CD4-positive, alpha-beta memory T cell (primary cell): ENCODE measurements at regions of chr11 and their contacts with region 1.

Region 1: DNA sequence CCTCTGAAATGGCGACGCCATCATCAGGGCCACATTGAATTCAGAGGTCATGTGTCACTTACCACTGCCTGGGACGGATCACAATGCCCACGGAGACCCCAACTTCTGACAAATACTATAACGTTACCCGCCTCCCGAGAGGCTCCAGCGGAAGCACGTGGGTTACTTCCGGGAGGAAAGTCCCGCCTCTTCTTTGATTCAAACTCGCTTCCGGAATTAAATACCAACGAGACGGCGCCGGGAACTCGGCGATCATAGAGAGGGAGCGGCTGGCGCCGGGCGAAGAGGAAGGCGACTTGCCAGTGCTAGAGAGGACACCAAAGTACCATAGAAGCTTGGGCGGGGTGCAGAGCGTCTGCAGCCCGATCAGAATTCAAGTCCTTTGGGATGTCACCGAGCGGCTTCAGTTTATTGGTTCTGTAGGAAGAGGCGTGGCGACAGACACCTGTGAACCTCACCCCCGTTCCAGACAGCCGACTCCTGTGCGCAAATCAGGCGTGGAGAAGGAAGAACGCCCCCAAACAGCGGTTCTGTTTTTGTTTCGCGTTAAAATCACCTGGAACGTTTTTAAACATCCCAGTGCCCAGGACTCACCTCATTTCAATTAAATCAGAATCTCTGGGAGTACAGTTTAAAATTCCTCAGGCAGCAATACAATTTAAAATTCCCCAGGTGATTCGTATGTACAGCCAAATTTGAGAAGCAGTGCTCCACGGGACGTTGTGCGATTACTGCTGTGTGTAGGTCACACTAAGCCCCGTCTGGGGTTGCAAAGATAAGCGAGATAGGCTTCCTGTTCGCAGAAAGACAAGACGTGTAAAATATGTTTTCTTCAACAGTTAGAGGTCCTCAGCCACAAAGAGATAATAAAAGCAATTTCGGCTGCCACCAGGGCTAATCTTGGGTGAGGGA is at the start of gene TIMM10:
- DNase-seq: peak; percentile 93 to 98 (median 96)
- H3K4me3 ChIP-seq: peak within 1 kb of the TSS; percentile 71 to 94
- H3K4me3 Mint-ChIP-seq: peak within 1 kb of the TSS; percentile 88 to 95 (median 90)
- H3K27ac ChIP-seq: peak within 1 kb of the TSS; percentile 88
- H3K27ac Mint-ChIP-seq: peak within 1 kb of the TSS; percentile 92 to 96 (median 95)
- H3K4me1 ChIP-seq: peaks cover 23% of the 10 kb centered on the region
- H3K4me1 Mint-ChIP-seq: peaks cover 9 to 34% (median 26%) of the 10 kb centered on the region in 4 donors
- H3K27me3 ChIP-seq: no peaks in the 10 kb centered on the region
- H3K27me3 Mint-ChIP-seq: no peaks in the 10 kb centered on the region
- total RNA-seq, gene TIMM10: 30.4 to 34.6 TPM

Region 2: GRCh38 chr11:57426929-57427726 is 103.7 kb before region 1 on chr11 and contains the start of gene SLC43A3:
- CTCF ChIA-PET with region 1: interaction called, 5 read pairs
- POLR2A ChIA-PET with region 1: no interaction called
- intact Hi-C with region 1: loop called (anchors 1 kb)
- DNase-seq: peak; percentile 36 to 62 (median 37)
- H3K4me3 ChIP-seq: peak within 1 kb of the TSS; percentile 32 to 58
- H3K4me3 Mint-ChIP-seq: peak within 1 kb of the TSS; percentile 83 to 93 (median 88)
- H3K27ac ChIP-seq: peak within 1 kb of the TSS; percentile 45
- H3K27ac Mint-ChIP-seq: peak within 1 kb of the TSS; percentile 78 to 94 (median 90)
- H3K4me1 ChIP-seq: peaks cover 34% of the 10 kb centered on the region
- H3K4me1 Mint-ChIP-seq: peaks cover 33 to 56% (median 40%) of the 10 kb centered on the region in 4 donors
- H3K27me3 ChIP-seq: no peaks in the 10 kb centered on the region
- H3K27me3 Mint-ChIP-seq: no peaks in the 10 kb centered on the region
- total RNA-seq, gene SLC43A3: 15.1 to 15.6 TPM

Region 3: DNA sequence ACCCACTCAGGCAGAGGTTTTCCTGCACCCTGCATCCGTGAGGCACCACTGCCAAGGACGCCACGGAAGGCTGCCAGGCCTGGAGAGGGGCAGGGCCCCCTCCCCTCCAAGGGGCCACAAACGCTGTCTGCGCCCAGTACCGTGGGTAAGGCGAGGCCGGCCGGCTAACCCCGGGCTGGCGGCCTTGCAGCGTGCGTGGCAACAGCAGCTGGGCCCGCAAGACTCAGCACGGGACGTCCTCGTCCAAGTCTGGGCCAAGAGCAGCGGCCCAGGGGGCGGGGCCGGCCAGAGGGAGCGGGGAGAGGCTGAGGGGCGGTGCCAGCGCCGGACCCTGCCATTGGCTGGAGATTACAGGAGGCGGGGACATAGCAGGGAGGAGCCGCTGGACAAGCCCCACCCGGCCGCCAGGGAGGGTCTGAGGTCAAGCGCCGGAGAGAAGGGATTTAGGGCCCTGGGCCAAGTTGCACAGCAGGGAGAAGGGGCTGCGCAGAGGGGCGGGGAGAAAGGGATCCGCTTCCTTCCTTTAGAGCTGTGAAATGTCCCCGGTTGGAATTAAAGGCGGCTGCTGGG is 31.4 kb before region 1 on chr11:
- CTCF ChIA-PET with region 1: interaction called, 848 read pairs
- POLR2A ChIA-PET with region 1: interaction called, 30 read pairs
- intact Hi-C with region 1: no loop called
- DNase-seq: no peak
- H3K4me3 ChIP-seq: no peak overlapping the region
- H3K4me3 Mint-ChIP-seq: no peak overlapping the region
- H3K27ac ChIP-seq: no peak overlapping the region
- H3K27ac Mint-ChIP-seq: no peak overlapping the region
- H3K4me1 ChIP-seq: no peaks in the 10 kb centered on the region
- H3K4me1 Mint-ChIP-seq: peaks cover 0 to 3% (median 0%) of the 10 kb centered on the region in 4 donors
- H3K27me3 ChIP-seq: no peaks in the 10 kb centered on the region
- H3K27me3 Mint-ChIP-seq: no peaks in the 10 kb centered on the region

Region 4: GRCh38 chr11:57567515-57568329 is 36.9 kb after region 1 on chr11 and contains the start of gene UBE2L6:
- CTCF ChIA-PET with region 1: interaction called, 19 read pairs
- POLR2A ChIA-PET with region 1: interaction called, 7 read pairs
- intact Hi-C with region 1: loop called (anchors 1 kb)
- DNase-seq: peak; percentile 59 to 86 (median 66)
- H3K4me3 ChIP-seq: peak within 1 kb of the TSS; percentile 72 to 81
- H3K4me3 Mint-ChIP-seq: peak within 1 kb of the TSS; percentile 94 to 100 (median 99)
- H3K27ac ChIP-seq: peak within 1 kb of the TSS; percentile 93
- H3K27ac Mint-ChIP-seq: peak within 1 kb of the TSS; percentile 97 to 99 (median 98)
- H3K4me1 ChIP-seq: peaks cover 34% of the 10 kb centered on the region
- H3K4me1 Mint-ChIP-seq: peaks cover 27 to 65% (median 42%) of the 10 kb centered on the region in 4 donors
- H3K27me3 ChIP-seq: no peaks in the 10 kb centered on the region
- H3K27me3 Mint-ChIP-seq: no peaks in the 10 kb centered on the region
- total RNA-seq, gene UBE2L6: 79.7 to 82.9 TPM

Region 5: DNA sequence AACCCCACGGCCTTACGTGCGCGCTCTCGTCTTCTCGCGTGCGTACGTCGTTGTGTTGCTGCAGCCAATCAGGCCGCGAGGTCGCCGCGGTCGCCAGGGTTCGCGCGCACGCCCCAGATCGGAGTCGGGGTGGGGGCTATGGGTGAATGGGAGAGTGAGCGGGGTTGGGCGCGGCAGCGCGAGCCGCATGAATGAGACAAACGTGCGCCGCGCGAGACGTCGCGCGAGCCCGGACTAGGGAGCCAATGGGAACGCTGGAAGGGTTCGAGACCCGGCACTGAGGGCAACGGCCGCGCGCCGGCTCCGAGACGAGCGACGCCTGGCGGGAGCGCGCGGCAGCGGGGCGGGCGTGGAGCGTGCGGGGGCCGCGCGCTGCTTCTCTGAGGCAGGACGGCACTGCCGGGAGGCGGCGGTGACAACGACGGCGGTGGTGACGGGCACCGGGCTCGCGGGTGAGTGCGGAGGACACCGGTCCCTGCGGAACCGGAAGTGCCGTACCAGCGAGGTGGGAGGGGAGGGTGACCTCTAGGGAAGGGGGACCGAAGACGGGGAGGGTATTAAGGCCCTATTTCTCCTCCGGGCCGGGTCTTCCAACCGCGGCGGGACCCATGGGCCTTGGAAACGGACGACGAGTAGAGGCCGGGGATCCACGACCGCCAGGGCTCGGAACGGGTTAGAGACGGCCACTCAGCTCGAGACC is 137.0 kb after region 1 on chr11 and contains the start of gene ZDHHC5:
- CTCF ChIA-PET with region 1: interaction called, 4 read pairs
- POLR2A ChIA-PET with region 1: interaction called, 4 read pairs
- intact Hi-C with region 1: loop called (anchors 1 kb)
- DNase-seq: peak; percentile 99 to 100 (median 100)
- H3K4me3 ChIP-seq: peak within 1 kb of the TSS; percentile 75 to 93
- H3K4me3 Mint-ChIP-seq: peak within 1 kb of the TSS; percentile 88 to 99 (median 96)
- H3K27ac ChIP-seq: peak within 1 kb of the TSS; percentile 91
- H3K27ac Mint-ChIP-seq: peak within 1 kb of the TSS; percentile 98 to 100 (median 99)
- H3K4me1 ChIP-seq: peaks cover 46% of the 10 kb centered on the region
- H3K4me1 Mint-ChIP-seq: peaks cover 33 to 67% (median 45%) of the 10 kb centered on the region in 4 donors
- H3K27me3 ChIP-seq: no peaks in the 10 kb centered on the region
- H3K27me3 Mint-ChIP-seq: peaks cover 0 to 5% of the 10 kb centered on the region in 2 donors
- total RNA-seq, gene ZDHHC5: 73.2 to 75.8 TPM

Region 6: GRCh38 chr11:57698843-57699365 is 168.1 kb after region 1 on chr11:
- CTCF ChIA-PET with region 1: no interaction called
- POLR2A ChIA-PET with region 1: no interaction called
- intact Hi-C with region 1: no loop called
- DNase-seq: no peak
- H3K4me3 ChIP-seq: no peak overlapping the region
- H3K4me3 Mint-ChIP-seq: no peak overlapping the region
- H3K27ac ChIP-seq: no peak overlapping the region
- H3K27ac Mint-ChIP-seq: no peak overlapping the region
- H3K4me1 ChIP-seq: no peaks in the 10 kb centered on the region
- H3K4me1 Mint-ChIP-seq: no peaks in the 10 kb centered on the region
- H3K27me3 ChIP-seq: no peaks in the 10 kb centered on the region
- H3K27me3 Mint-ChIP-seq: no peaks in the 10 kb centered on the region

Region 7: DNA sequence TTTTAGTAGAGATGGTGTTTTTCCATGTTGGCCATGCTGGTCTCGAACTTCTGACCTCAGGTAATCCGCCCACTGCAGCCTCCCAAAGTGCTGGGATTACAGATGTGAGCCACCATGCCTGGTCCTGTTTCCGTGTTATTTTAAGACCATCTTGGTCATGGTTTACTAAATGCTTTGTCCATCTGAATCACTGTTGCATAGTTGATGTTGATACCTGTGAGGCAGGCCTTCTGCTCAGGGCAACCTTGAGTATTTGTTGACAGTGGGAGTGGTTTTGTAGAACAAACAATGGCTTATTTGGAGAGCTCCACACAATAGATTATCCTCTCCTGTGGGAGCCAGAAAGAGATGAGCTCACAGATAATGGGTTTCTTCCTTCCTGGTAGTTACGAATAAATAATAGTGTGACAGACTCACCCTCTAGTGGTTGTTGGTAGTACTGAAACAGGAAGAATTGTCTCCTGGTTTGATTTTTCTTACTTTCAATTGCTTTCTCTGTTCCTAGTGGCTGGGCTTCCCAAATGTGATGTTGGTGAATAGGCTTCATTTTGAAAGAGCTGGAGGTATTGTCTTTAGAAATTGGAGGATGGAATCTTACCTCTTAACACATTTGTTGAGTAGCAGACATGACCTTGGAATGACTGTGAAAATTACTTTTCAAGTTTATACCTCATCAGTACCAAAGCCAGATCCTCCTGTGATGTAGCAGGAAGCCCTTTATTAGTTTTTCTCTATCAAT is 269.8 kb after region 1 on chr11:
- CTCF ChIA-PET with region 1: interaction called, 10 read pairs
- POLR2A ChIA-PET with region 1: no interaction called
- intact Hi-C with region 1: loop called (anchors 1 kb)
- DNase-seq: peak in 4 of 5 donors; percentile 57 to 65 (median 64)
- H3K4me3 ChIP-seq: no peak overlapping the region
- H3K4me3 Mint-ChIP-seq: peak overlapping the region in 6 of 8 donors; percentile 7 to 69 (median 22)
- H3K27ac ChIP-seq: peak overlapping the region; percentile 24
- H3K27ac Mint-ChIP-seq: peak overlapping the region; percentile 65 to 94 (median 89)
- H3K4me1 ChIP-seq: peaks cover 27% of the 10 kb centered on the region
- H3K4me1 Mint-ChIP-seq: peaks cover 10 to 29% (median 21%) of the 10 kb centered on the region in 4 donors
- H3K27me3 ChIP-seq: no peaks in the 10 kb centered on the region
- H3K27me3 Mint-ChIP-seq: no peaks in the 10 kb centered on the region